SK-N-SH (cell line): ENCODE measurements at regions of chr5 and their contacts with region 1.

Region 1: GRCh38 chr5:138110266-138110963 is 26.6 kb downstream of the WNT8A start:
- DNase-seq: no peak
- H3K4me3 ChIP-seq: no peak overlapping the region
- H3K27ac ChIP-seq: no peak overlapping the region
- H3K4me1 ChIP-seq: no peaks in the 10 kb centered on the region
- H3K27me3 ChIP-seq: no peaks in the 10 kb centered on the region
- CTCF ChIP-seq: no peak
- EP300 ChIP-seq: no peak
- RAD21 ChIP-seq: no peak

Region 2: DNA sequence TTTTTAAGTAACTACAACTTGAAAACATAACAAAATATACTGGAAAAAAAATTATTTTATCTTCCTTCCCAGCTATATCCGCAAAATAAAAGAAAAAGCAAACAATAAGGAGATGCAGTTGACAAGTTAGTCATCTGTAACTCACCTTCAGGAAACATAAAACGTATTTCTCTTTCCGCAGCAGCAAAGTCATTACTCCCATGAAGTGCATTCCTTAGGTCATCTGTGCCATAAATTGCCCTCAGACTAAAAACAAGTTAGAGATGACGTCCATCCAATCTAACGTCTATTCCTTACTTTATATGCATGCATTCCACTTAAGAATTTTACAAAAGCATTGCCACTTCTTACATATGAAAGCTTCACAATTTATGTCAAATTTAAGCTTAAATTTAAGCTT is 17.9 kb after region 1 on chr5:
- CTCF ChIA-PET with region 1: interaction called, 18 read pairs
- POLR2A ChIA-PET with region 1: no interaction called
- DNase-seq: no peak
- H3K4me3 ChIP-seq: no peak overlapping the region
- H3K27ac ChIP-seq: no peak overlapping the region
- H3K4me1 ChIP-seq: no peaks in the 10 kb centered on the region
- H3K27me3 ChIP-seq: no peaks in the 10 kb centered on the region
- CTCF ChIP-seq: no peak
- EP300 ChIP-seq: no peak
- RAD21 ChIP-seq: no peak